BJ (cell line): ENCODE measurements at regions of chr17 and their contacts with region 1.

Region 1: GRCh38 chr17:65442250-65442649 is 119.2 kb downstream of the AXIN2 start:
- DNase-seq: no peak
- H3K4me3 ChIP-seq: no peak overlapping the region
- H3K27me3 ChIP-seq: peaks cover 10% of the 10 kb centered on the region
- CTCF ChIP-seq: no peak

Region 2: GRCh38 chr17:65359016-65359415 is 83.2 kb before region 1 on chr17:
- CTCF ChIA-PET with region 1: no interaction called
- POLR2A ChIA-PET with region 1: no interaction called
- DNase-seq: peak; percentile 39
- H3K4me3 ChIP-seq: no peak overlapping the region
- H3K27me3 ChIP-seq: no peaks in the 10 kb centered on the region
- CTCF ChIP-seq: no peak

Region 3: GRCh38 chr17:65394651-65395472 is 47.4 kb before region 1 on chr17:
- CTCF ChIA-PET with region 1: no interaction called
- POLR2A ChIA-PET with region 1: no interaction called
- DNase-seq: no peak
- H3K4me3 ChIP-seq: no peak overlapping the region
- H3K27me3 ChIP-seq: peaks cover 2% of the 10 kb centered on the region; the same call in 1 of the 2 replicates
- CTCF ChIP-seq: no peak

Region 4: DNA sequence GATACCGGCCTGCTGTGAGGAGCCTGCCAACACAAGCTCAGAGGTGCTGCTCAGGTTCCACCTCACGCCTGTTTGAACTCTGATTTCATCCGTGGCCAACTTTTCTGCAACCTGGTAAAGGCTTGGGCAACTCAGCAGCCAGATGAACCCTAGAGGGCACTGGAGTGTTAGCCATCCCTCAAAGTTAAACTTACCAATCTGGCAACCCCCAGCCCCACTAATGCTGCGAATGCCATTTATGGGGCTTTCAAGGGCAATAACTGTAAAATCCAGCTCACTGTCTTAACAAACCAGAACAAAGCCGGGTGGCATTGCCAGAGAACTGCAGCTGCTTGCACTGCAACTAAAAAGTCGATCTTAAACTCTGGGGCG is 13.7 kb after region 1 on chr17:
- CTCF ChIA-PET with region 1: interaction called, 13 read pairs
- POLR2A ChIA-PET with region 1: no interaction called
- DNase-seq: no peak
- H3K4me3 ChIP-seq: no peak overlapping the region
- H3K27me3 ChIP-seq: peaks cover 3% of the 10 kb centered on the region; the same call in 1 of the 2 replicates
- CTCF ChIP-seq: peak; percentile 47